ENCODE measurements at regions of chr16 and their contacts with region 1.

Region 1: GRCh38 chr16:56681939-56682702 is at the start of gene MT1X:
- DNase-seq: peak in 1 of 2 donors; percentile 98
- H3K4me3 ChIP-seq: peak within 1 kb of the TSS; percentile 59 to 75
- H3K27ac ChIP-seq: peak within 1 kb of the TSS; percentile 80
- H3K4me1 ChIP-seq: peaks cover 24% of the 10 kb centered on the region
- H3K27me3 ChIP-seq: no peaks in the 10 kb centered on the region
- CTCF ChIP-seq: no peak
- POLR2A ChIP-seq: peak in 1 of 2 donors; percentile 96
- total RNA-seq, gene MT1X: 3,049 TPM

Region 2: GRCh38 chr16:56625140-56625942 is 56.8 kb before region 1 on chr16 and contains the start of gene MT1E:
- intact Hi-C with region 1: loop called (anchors 5 kb)
- DNase-seq: no peak
- H3K4me3 ChIP-seq: peak within 1 kb of the TSS; percentile 49 to 59
- H3K27ac ChIP-seq: peak within 1 kb of the TSS; percentile 81
- H3K4me1 ChIP-seq: peaks cover 17% of the 10 kb centered on the region
- H3K27me3 ChIP-seq: no peaks in the 10 kb centered on the region
- CTCF ChIP-seq: no peak
- POLR2A ChIP-seq: peak in 1 of 2 donors; percentile 81
- total RNA-seq, gene MT1E: 564 TPM